Panc1 (cell line): ENCODE measurements at regions of chr20 and their contacts with region 1.

Region 1: GRCh38 chr20:41483553-41483930 is 116.9 kb upstream of the EMILIN3 start:
- DNase-seq: no peak
- ATAC-seq: 0 out of 2 replicates have a peak, but pooled peaks have one; percentile 30
- H3K4me3 ChIP-seq: no peak overlapping the region
- H3K27ac ChIP-seq: no peak overlapping the region; the same call in 1 of the 2 replicates
- H3K4me1 ChIP-seq: peaks cover 7% of the 10 kb centered on the region
- H3K27me3 ChIP-seq: no peaks in the 10 kb centered on the region
- CTCF ChIP-seq: no peak

Region 2: GRCh38 chr20:41499064-41499463 is 15.5 kb after region 1 on chr20:
- CTCF ChIA-PET with region 1: no interaction called
- POLR2A ChIA-PET with region 1: interaction called, 10 read pairs
- in situ Hi-C with region 1: no loop called
- intact Hi-C with region 1: no loop called
- DNase-seq: no peak
- ATAC-seq: no peak
- H3K4me3 ChIP-seq: no peak overlapping the region
- H3K27ac ChIP-seq: no peak overlapping the region
- H3K4me1 ChIP-seq: no peaks in the 10 kb centered on the region
- H3K27me3 ChIP-seq: no peaks in the 10 kb centered on the region
- CTCF ChIP-seq: no peak